Naive thymus-derived CD4-positive, alpha-beta T cell (primary cell): ENCODE measurements at regions of chr5 and their contacts with region 1.

Region 1: DNA sequence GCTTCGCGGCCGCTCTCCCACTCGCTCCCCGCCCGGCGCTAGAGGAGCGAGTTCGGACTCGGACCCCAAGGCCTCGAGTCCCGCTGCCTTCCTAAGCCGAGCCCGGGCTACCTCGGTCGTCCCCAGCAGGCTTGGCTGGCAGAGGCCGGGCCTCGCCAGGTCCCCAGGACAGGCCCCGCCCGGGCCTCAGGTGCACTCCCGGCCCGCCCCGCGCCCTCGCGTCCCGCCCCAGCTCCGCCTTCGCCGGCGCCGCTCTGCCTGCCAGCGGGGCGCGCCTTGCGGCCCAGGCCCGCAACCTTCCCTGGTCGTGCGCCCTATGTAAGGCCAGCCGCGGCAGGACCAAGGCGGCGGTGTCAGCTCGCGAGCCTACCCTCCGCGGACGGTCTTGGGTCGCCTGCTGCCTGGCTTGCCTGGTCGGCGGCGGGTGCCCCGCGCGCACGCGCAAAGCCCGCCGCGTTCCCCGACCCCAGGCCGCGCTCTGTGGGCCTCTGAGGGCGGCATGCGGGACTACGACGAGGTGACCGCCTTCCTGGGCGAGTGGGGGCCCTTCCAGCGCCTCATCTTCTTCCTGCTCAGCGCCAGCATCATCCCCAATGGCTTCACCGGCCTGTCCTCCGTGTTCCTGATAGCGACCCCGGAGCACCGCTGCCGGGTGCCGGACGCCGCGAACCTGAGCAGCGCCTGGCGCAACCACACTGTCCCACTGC is at the start of gene SLC22A5:
- DNase-seq: peak; percentile 65 to 79 (median 74)
- ATAC-seq: peak; percentile 93
- H3K4me3 ChIP-seq: peak within 1 kb of the TSS; percentile 72
- H3K4me3 Mint-ChIP-seq: peak within 1 kb of the TSS; percentile 76 to 92 (median 88)
- H3K27ac ChIP-seq: peak within 1 kb of the TSS; percentile 91
- H3K27ac Mint-ChIP-seq: peak within 1 kb of the TSS; percentile 64 to 93 (median 90)
- H3K4me1 ChIP-seq: peaks cover 7 to 11% of the 10 kb centered on the region in 2 donors
- H3K4me1 Mint-ChIP-seq: peaks cover 12 to 40% (median 31%) of the 10 kb centered on the region in 7 donors
- H3K27me3 ChIP-seq: no peaks in the 10 kb centered on the region
- H3K27me3 Mint-ChIP-seq: no peaks in the 10 kb centered on the region
- total RNA-seq, gene SLC22A5: 6.8 to 10.8 (median 8.0) TPM

Region 2: DNA sequence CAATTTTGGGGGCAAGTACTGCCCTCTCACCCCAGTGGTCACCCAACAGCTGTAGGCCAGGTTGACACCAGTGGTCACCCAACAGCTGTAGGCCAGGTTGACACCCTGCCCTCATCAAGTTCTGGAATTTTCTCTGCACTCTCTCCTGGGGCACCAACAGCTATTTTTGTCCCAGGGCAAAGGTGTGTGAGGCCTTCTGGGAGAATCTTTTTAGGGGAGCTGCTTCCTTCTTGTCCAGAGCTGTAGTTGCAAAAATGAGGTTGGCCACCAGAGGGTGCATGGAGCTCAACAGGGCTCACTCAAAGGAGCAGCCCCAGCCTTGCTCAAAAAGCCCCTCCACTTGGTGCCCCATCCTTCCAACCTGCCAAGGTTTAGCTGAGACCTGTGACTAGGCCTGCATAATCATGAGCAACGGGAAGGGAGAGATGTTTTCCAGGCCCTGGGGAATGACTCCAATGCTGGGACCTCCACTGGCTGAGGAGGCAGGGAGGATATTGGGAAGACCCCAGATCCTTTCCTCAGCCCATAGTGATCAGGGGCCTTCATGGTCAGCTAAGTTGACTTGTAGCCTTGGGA is 131.4 kb before region 1 on chr5:
- CTCF ChIA-PET with region 1: no interaction called
- POLR2A ChIA-PET with region 1: no interaction called
- intact Hi-C with region 1: loop called in 1 of 2 experiments (anchors 10 kb)
- DNase-seq: peak in 8 of 9 donors; percentile 34 to 76 (median 44)
- ATAC-seq: peak; percentile 70
- H3K4me3 ChIP-seq: no peak overlapping the region
- H3K4me3 Mint-ChIP-seq: no peak overlapping the region
- H3K27ac ChIP-seq: no peak overlapping the region
- H3K27ac Mint-ChIP-seq: no peak overlapping the region
- H3K4me1 ChIP-seq: no peaks in the 10 kb centered on the region
- H3K4me1 Mint-ChIP-seq: peaks cover 0 to 2% (median 0%) of the 10 kb centered on the region in 7 donors
- H3K27me3 ChIP-seq: no peaks in the 10 kb centered on the region
- H3K27me3 Mint-ChIP-seq: peaks cover 0 to 21% (median 4%) of the 10 kb centered on the region in 5 donors

Region 3: GRCh38 chr5:132272311-132273210 is 97.1 kb before region 1 on chr5:
- CTCF ChIA-PET with region 1: no interaction called
- POLR2A ChIA-PET with region 1: no interaction called
- intact Hi-C with region 1: loop called in 1 of 2 experiments (anchors 5 kb)
- DNase-seq: peak; percentile 21 to 72 (median 49)
- ATAC-seq: peak; percentile 42
- H3K4me3 ChIP-seq: no peak overlapping the region
- H3K4me3 Mint-ChIP-seq: peak overlapping the region in 6 of 10 donors; percentile 25 to 80 (median 54)
- H3K27ac ChIP-seq: no peak overlapping the region
- H3K27ac Mint-ChIP-seq: peak overlapping the region in 1 of 9 donors; percentile 52
- H3K4me1 ChIP-seq: peaks cover 0 to 4% of the 10 kb centered on the region in 2 donors
- H3K4me1 Mint-ChIP-seq: peaks cover 0 to 16% (median 12%) of the 10 kb centered on the region in 7 donors
- H3K27me3 ChIP-seq: no peaks in the 10 kb centered on the region
- H3K27me3 Mint-ChIP-seq: peaks cover 10 to 31% (median 14%) of the 10 kb centered on the region in 5 donors

Region 4: GRCh38 chr5:132695956-132696355 is 326.3 kb after region 1 on chr5:
- CTCF ChIA-PET with region 1: no interaction called
- POLR2A ChIA-PET with region 1: no interaction called
- intact Hi-C with region 1: no loop called
- DNase-seq: no peak
- ATAC-seq: no peak
- H3K4me3 ChIP-seq: no peak overlapping the region
- H3K4me3 Mint-ChIP-seq: no peak overlapping the region
- H3K27ac ChIP-seq: no peak overlapping the region
- H3K27ac Mint-ChIP-seq: no peak overlapping the region
- H3K4me1 ChIP-seq: peaks cover 0 to 4% of the 10 kb centered on the region in 2 donors
- H3K4me1 Mint-ChIP-seq: peaks cover 0 to 21% (median 0%) of the 10 kb centered on the region in 7 donors
- H3K27me3 ChIP-seq: no peaks in the 10 kb centered on the region
- H3K27me3 Mint-ChIP-seq: no peaks in the 10 kb centered on the region